ENCODE measurements at regions of chr1 and their contacts with region 1.

Region 1: GRCh38 chr1:172002725-172003345 is 161.5 kb downstream of the DNM3 start:
- H3K4me3 ChIP-seq: no peak overlapping the region
- H3K27ac ChIP-seq: no peak overlapping the region
- H3K4me1 ChIP-seq: no peaks in the 10 kb centered on the region
- CTCF ChIP-seq: no peak

Region 2: DNA sequence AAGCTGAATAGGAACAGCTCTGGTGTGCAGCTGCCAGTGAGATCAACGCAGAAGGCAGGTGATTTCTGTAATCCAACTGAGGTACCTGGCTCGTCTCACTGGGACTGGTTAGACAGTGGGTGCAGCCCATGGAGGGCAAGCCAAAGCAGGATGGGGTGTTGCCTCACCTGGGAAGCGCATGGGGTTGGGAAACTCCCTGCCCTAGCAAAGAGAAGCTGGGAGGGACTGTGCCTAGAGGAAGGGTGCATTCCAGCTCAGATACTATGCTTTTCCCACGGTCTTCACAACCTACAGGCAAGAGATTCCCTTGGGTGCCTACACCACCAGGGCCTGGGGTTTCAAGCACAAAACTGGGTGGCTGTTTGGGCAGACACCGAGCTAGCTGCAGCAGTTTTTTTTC is 21.7 kb after region 1 on chr1:
- CTCF ChIA-PET with region 1: interaction called, 10 read pairs
- POLR2A ChIA-PET with region 1: no interaction called
- H3K4me3 ChIP-seq: no peak overlapping the region
- H3K27ac ChIP-seq: no peak overlapping the region
- H3K4me1 ChIP-seq: no peaks in the 10 kb centered on the region
- CTCF ChIP-seq: no peak

Region 3: GRCh38 chr1:172054172-172054571 is 51.3 kb after region 1 on chr1:
- CTCF ChIA-PET with region 1: no interaction called
- POLR2A ChIA-PET with region 1: no interaction called
- H3K4me3 ChIP-seq: no peak overlapping the region
- H3K27ac ChIP-seq: no peak overlapping the region
- H3K4me1 ChIP-seq: no peaks in the 10 kb centered on the region; the same call in 1 of the 2 replicates
- CTCF ChIP-seq: no peak

Region 4: GRCh38 chr1:172089768-172090510 is 87.1 kb after region 1 on chr1:
- CTCF ChIA-PET with region 1: no interaction called
- POLR2A ChIA-PET with region 1: no interaction called
- H3K4me3 ChIP-seq: no peak overlapping the region
- H3K27ac ChIP-seq: no peak overlapping the region
- H3K4me1 ChIP-seq: no peaks in the 10 kb centered on the region
- CTCF ChIP-seq: no peak

Region 5: DNA sequence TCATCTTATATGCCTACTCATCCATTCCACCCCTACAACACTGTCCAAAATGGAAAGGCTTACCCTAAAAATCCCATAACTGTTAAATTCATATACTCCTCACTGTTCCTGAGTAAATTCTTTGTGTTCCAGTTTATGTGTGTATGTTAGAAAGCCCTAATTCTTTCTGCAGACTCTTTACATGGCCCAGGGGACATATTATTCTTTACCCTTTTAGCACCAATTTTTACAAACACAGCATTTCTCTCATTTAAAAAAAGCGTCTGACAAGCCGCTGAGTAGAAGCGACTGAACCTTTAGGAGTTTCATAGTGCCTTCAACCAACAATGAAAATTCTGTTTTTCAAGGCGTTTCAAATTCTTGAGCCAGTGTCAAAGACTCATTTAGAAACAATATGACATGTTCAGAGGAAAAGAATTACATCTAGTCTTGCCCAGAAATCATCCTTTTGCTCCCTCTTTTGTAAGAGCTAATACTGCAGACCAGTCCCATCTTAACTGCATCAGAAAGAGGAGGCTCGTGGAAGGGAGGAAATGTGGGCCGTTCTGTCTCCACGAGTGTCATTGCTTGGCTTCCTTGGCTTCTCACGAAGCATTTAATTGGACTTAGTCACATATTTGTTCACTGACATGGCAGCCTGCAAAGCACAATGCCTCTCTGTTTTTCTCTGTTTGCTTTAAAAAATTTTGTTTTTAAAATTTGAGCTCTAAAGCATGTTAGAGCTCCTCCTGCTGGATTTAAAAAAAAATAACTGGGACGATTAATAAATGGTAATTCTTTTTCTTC is 396.3 kb after region 1 on chr1:
- CTCF ChIA-PET with region 1: interaction called, 19 read pairs
- POLR2A ChIA-PET with region 1: no interaction called
- H3K4me3 ChIP-seq: no peak overlapping the region
- H3K27ac ChIP-seq: no peak overlapping the region
- H3K4me1 ChIP-seq: no peaks in the 10 kb centered on the region
- CTCF ChIP-seq: peak; percentile 8; the same call in 1 of the 2 replicates

Region 6: DNA sequence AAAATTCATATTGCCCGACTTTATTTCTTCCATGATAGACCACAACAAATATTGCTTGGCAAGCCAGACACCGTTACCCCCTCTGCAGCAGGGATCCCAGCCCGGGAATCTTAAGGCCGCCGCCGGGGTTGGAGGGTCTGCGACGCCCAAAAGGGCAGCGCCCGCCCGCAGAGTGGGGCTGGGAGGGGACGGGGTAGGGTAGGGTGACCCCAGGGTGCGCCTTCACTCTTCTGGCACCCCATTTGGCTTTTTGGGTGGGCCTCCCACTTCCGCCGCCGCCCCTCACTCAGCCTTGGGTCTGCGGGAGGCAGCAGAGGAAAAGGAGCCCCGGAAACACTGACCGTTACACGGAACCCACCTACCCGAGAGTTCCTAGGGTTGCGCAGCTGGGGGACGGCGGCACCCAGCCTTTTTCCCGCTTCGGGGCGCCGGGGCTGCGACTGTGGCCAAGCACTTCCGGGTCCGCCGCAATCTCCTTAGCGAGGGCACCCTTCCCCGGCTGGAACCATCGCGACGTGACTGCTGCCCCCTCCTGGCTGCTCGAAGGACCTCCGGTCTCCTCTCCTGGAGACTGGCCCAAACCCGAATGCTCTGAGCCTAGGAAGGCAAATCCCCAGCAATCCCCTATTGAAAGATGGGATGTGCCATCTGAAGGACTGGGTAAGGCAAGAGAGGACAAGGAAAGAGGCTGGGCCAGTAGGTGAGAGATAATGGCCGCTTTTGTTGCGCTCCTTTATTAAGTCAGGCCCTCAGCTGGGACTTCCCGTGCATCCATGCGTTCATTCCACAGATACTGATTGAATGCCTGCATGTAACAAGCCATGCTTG is 441.0 kb after region 1 on chr1 and contains the start of gene PIGC:
- CTCF ChIA-PET with region 1: interaction called, 23 read pairs
- POLR2A ChIA-PET with region 1: no interaction called
- H3K4me3 ChIP-seq: peak within 1 kb of the TSS; percentile 89
- H3K27ac ChIP-seq: peak within 1 kb of the TSS; percentile 44; the same call in 1 of the 2 replicates
- H3K4me1 ChIP-seq: no peaks in the 10 kb centered on the region
- CTCF ChIP-seq: peak; percentile 86